GM18951 (cell line): ENCODE measurements at regions of chr17 and their contacts with region 1.

Region 1: DNA sequence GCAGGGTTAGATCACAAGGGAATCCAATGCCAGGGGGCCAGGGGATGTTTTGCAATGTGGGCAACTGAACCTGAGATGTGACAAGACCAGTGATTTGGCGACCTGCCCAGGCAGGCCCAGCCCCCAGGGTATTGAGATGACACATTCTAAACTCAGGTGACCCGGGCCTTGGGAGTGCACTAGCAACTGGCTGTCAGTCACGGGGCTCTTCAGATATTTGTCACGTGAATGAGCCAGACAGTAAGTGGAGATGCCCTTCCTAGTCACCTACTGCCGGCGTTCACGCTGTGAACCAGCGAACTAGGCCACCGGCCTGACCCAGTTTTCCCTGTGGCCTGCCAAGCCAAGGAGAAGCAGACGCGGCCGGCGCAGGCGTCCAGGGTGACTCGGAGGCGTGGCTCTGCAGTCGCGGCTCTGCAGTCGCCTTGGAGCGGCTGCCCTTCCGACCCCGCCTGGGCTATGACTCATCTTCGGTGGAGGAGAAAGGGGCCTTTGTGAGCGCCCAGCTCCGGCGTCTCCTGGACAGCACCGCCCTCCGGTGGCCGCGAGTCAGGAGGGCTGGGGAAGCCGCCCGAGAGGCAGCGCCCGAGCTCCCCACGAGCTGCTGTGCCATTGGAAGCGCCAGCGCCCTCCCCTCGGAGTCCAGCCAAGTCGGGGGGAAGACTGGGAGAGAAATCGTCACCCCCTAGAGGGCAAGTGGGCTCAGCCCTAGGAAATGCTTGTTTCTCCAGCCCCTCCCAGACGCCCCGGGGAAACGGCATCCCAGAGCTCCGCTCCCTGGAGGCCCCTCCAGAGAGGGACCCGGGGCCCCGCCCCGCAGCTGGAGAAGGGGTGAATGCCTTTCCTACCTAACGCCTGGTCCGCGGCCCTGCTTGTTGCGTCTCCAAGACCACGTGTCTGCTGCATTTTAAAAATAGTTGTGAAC is 38.8 kb downstream of the WSB1 start:
- POLR2A ChIP-seq: peak; percentile 21

Region 2: DNA sequence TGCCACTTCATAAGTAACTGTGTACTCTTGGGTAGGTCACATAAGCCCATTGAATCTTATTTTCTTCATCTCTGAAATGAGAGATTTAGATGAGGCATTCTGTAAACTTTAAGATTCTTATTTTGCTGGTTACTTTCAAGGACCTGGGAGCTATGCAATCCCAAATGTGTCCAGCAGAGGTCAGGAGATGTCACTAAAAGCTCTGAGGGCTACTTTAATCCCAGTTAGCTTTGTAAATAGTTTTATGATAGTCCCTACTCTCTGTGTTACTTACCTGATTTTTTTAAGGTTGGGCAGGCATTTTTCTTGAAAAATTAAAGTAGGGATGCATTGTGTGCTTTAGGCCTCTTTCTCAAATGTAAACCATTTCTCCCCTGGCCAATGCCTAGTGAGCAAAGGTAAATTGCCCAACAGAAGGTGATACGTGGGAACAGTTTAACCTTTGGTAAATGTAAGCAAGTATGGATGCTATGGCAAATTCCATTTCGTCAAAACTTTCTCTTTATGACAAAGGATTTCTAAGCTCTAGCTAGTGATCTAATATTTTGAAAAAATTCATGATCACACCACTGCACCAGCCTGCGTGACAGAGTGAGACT is 95.9 kb before region 1 on chr17:
- in situ Hi-C with region 1: loop called (anchors 10 kb)
- POLR2A ChIP-seq: no peak